ENCODE measurements at regions of chr4 and their contacts with region 1.

Region 1: GRCh38 chr4:139501927-139502899 is 48.3 kb downstream of the RAB33B start:
- DNase-seq: no peak
- ATAC-seq: peak; percentile 34
- H3K4me3 Mint-ChIP-seq: no peak overlapping the region
- H3K27ac Mint-ChIP-seq: peak overlapping the region; percentile 64
- H3K4me1 Mint-ChIP-seq: peaks cover 13% of the 10 kb centered on the region
- H3K27me3 Mint-ChIP-seq: no peaks in the 10 kb centered on the region
- CTCF ChIP-seq: no peak

Region 2: GRCh38 chr4:139301113-139301820 is 200.9 kb before region 1 on chr4 and contains the start of gene NAA15:
- CTCF ChIA-PET with region 1: no interaction called
- POLR2A ChIA-PET with region 1: no interaction called
- DNase-seq: peak; percentile 97
- ATAC-seq: peak; percentile 97
- H3K4me3 Mint-ChIP-seq: peak within 1 kb of the TSS; percentile 99
- H3K27ac Mint-ChIP-seq: peak within 1 kb of the TSS; percentile 99
- H3K4me1 Mint-ChIP-seq: peaks cover 35% of the 10 kb centered on the region
- H3K27me3 Mint-ChIP-seq: peaks cover 2% of the 10 kb centered on the region; the same call in 1 of the 2 replicates
- CTCF ChIP-seq: no peak
- total RNA-seq, gene NAA15: 81.4 to 98.9 TPM (median 81.6 TPM) in 3 replicates

Region 3: DNA sequence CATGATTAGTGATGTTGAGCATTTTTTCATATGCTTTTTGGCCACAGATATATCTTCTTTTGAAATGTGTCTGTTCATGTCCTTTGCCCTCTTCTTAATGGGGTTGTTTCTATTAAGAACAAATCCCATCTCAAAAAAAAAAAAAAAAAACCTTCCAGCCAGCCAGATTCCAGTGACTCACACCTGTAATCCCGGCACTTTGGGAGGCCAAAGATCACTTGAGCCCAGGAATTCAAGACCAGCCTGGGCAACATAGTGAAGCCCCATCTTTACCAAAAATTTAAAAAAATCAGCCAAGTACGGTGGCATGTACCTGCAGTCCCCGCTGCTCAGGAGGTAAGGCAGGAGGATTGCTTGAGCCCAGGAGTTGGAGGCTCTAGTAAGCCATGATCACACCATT is 43.2 kb before region 1 on chr4:
- CTCF ChIA-PET with region 1: interaction called, 11 read pairs
- POLR2A ChIA-PET with region 1: interaction called, 3 read pairs
- DNase-seq: no peak
- ATAC-seq: no peak
- H3K4me3 Mint-ChIP-seq: no peak overlapping the region
- H3K27ac Mint-ChIP-seq: peak overlapping the region; percentile 43
- H3K4me1 Mint-ChIP-seq: peaks cover 64% of the 10 kb centered on the region
- H3K27me3 Mint-ChIP-seq: no peaks in the 10 kb centered on the region
- CTCF ChIP-seq: no peak

Region 4: DNA sequence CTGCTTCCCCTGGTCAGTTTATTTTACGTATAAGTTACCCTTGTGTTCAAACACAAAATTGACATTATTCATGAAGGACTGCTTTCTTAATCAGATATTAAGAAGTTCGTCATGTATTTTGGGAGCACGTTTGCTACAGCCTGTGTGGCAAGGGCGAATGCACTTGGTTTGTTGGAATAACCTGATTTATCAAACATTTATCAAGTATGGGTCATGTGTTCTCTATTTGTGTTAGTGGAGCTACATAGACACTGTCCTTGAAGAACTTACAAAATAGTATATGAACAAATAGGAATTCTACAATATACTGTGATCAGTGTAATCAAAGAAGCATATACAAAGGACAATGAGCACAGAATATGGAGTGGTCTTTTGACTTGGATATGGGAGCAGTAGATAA is 25.9 kb before region 1 on chr4:
- CTCF ChIA-PET with region 1: interaction called, 14 read pairs
- POLR2A ChIA-PET with region 1: no interaction called
- DNase-seq: no peak
- ATAC-seq: no peak
- H3K4me3 Mint-ChIP-seq: no peak overlapping the region
- H3K27ac Mint-ChIP-seq: no peak overlapping the region
- H3K4me1 Mint-ChIP-seq: no peaks in the 10 kb centered on the region
- H3K27me3 Mint-ChIP-seq: no peaks in the 10 kb centered on the region; the same call in 1 of the 2 replicates
- CTCF ChIP-seq: no peak

Region 5: DNA sequence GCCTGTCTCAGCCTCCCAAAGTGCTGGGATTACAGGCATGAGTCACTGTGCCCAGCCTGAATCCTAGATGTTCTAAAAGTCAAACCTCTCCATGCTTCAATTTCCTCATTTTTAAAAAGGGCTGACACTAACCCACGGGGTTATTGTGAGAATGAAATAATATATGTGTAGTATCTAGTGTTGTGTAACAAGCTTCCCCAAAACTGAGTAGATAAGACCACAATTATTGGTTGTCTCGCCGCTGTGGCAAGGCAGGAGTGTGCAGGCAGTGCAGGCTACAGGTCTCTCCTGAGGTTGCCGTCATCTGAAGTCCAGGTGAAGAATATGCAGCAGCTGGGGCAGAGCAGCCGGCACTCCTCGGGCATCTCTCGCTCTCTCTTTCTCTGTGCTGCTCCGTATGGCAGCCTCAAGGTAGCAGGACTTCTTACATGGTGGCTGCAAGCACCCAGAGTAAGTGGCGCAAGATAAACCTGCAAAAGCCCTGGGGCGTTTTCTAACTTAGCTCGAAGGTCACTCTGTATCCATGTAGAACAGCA is 17.4 kb before region 1 on chr4:
- CTCF ChIA-PET with region 1: interaction called, 7 read pairs
- POLR2A ChIA-PET with region 1: interaction called, 12 read pairs
- DNase-seq: no peak
- ATAC-seq: peak; percentile 67
- H3K4me3 Mint-ChIP-seq: no peak overlapping the region
- H3K27ac Mint-ChIP-seq: no peak overlapping the region
- H3K4me1 Mint-ChIP-seq: 0 out of 2 replicates have a peak, but pooled peaks cover 2% of the 10 kb centered on the region
- H3K27me3 Mint-ChIP-seq: no peaks in the 10 kb centered on the region; the same call in 1 of the 2 replicates
- CTCF ChIP-seq: no peak